ENCODE measurements at regions of chr11 and their contacts with region 1.

Region 1: GRCh38 chr11:9384535-9385303 is at the start of gene IPO7:
- DNase-seq: peak; percentile 68 to 88 (median 84)
- ATAC-seq: peak; percentile 99
- H3K4me3 ChIP-seq: peak within 1 kb of the TSS; percentile 78
- H3K4me3 Mint-ChIP-seq: peak within 1 kb of the TSS; percentile 89 to 98 (median 94)
- H3K27ac ChIP-seq: peak within 1 kb of the TSS; percentile 88
- H3K27ac Mint-ChIP-seq: peak within 1 kb of the TSS; percentile 79 to 94 (median 91)
- H3K4me1 ChIP-seq: peaks cover 11 to 15% of the 10 kb centered on the region in 2 donors
- H3K4me1 Mint-ChIP-seq: peaks cover 25 to 51% (median 38%) of the 10 kb centered on the region in 7 donors
- H3K27me3 ChIP-seq: no peaks in the 10 kb centered on the region
- H3K27me3 Mint-ChIP-seq: no peaks in the 10 kb centered on the region
- total RNA-seq, gene IPO7: 47.3 to 105 (median 61.3) TPM

Region 2: GRCh38 chr11:9203691-9204311 is 180.9 kb before region 1 on chr11:
- CTCF ChIA-PET with region 1: no interaction called
- POLR2A ChIA-PET with region 1: no interaction called
- intact Hi-C with region 1: loop called in 1 of 2 experiments (anchors 5 kb)
- DNase-seq: peak in 7 of 9 donors; percentile 13 to 50 (median 24)
- ATAC-seq: peak; percentile 61
- H3K4me3 ChIP-seq: no peak overlapping the region
- H3K4me3 Mint-ChIP-seq: no peak overlapping the region
- H3K27ac ChIP-seq: no peak overlapping the region
- H3K27ac Mint-ChIP-seq: peak overlapping the region in 2 of 9 donors; percentile 9 to 50
- H3K4me1 ChIP-seq: no peaks in the 10 kb centered on the region
- H3K4me1 Mint-ChIP-seq: peaks cover 15 to 55% (median 26%) of the 10 kb centered on the region in 7 donors
- H3K27me3 ChIP-seq: no peaks in the 10 kb centered on the region
- H3K27me3 Mint-ChIP-seq: no peaks in the 10 kb centered on the region

Region 3: DNA sequence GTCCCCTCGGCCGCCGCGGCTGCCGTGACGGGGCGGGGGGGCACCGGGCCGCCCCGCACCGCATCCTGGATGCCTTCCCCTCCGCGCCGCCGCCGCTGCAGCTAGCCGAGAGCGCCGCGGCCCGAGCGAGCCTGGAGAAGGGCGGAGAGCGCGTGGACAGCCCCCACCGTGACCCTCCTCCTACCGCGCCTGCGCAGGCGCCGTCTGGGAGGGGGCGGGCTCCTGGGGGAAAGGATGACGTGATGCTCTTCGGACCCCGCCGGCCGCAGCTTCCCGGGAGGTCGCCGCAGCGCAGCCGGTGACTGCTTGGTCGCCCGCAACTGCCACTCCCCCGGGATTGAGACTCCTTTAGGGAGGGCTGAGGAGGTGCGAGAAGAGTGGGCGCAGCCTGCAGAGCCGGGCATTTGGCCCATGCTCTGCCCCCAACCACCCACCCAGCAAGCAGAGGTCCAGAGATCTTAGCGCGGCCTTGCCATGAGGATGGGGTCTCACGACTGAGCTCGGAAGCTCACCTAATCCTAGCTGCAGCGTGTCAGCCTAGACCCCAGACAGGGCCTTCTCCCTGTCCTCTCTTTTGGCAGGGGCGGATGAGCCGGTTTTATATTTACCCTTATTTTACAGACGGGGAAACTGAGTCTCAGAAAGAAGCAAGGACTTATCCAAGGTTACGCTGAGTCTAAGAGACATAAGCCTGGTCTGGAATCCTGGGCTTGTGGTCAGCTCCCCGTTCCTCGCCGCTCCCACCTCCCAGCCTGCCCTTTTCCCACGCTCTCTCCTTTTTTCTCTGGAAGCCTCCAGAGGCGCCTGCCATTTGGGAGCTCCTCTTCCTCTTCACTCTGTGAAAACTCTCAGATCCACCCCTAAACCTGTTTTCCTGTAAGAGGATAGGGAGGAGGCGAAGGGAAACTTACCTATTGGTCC is 119.2 kb before region 1 on chr11 and contains the start of gene DENND5A:
- CTCF ChIA-PET with region 1: no interaction called
- POLR2A ChIA-PET with region 1: no interaction called
- intact Hi-C with region 1: loop called in 1 of 2 experiments (anchors 5 kb)
- DNase-seq: peak; percentile 12 to 65 (median 34)
- ATAC-seq: peak; percentile 74
- H3K4me3 ChIP-seq: peak within 1 kb of the TSS; percentile 72
- H3K4me3 Mint-ChIP-seq: peak within 1 kb of the TSS; percentile 87 to 100 (median 97)
- H3K27ac ChIP-seq: peak within 1 kb of the TSS; percentile 72
- H3K27ac Mint-ChIP-seq: peak within 1 kb of the TSS; percentile 89 to 99 (median 95)
- H3K4me1 ChIP-seq: peaks cover 11 to 22% of the 10 kb centered on the region in 2 donors
- H3K4me1 Mint-ChIP-seq: peaks cover 25 to 43% (median 39%) of the 10 kb centered on the region in 7 donors
- H3K27me3 ChIP-seq: no peaks in the 10 kb centered on the region
- H3K27me3 Mint-ChIP-seq: peaks cover 0 to 46% (median 0%) of the 10 kb centered on the region in 5 donors
- total RNA-seq, gene DENND5A: 65.0 to 178 (median 108) TPM

Region 4: DNA sequence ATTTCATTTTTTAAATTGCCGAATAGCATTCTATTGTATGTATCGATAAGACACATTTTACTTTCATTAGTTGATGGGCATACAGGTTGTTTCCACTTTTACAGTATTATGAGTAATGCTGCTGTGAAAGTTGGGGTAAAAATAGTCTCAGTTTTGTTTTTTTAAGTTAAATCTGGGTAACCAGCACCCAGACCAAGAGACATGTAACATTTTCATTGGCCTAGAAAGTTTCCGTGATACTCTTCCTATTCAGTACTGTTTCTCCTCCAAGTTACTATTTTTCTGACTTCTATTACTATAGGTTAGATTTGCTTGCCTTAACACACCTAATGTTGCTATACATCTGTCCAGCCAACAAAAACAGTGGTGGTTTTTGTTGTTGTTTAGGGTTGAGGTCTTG is 12.0 kb after region 1 on chr11:
- CTCF ChIA-PET with region 1: no interaction called
- POLR2A ChIA-PET with region 1: interaction called, 8 read pairs
- intact Hi-C with region 1: loop called in 1 of 2 experiments (anchors 1 kb)
- DNase-seq: no peak
- ATAC-seq: no peak
- H3K4me3 ChIP-seq: no peak overlapping the region
- H3K4me3 Mint-ChIP-seq: peak overlapping the region in 5 of 10 donors; percentile 1 to 68 (median 10)
- H3K27ac ChIP-seq: no peak overlapping the region
- H3K27ac Mint-ChIP-seq: peak overlapping the region in 2 of 9 donors; percentile 3 to 11
- H3K4me1 ChIP-seq: peaks cover 8 to 13% of the 10 kb centered on the region in 2 donors
- H3K4me1 Mint-ChIP-seq: peaks cover 45 to 73% (median 60%) of the 10 kb centered on the region in 7 donors
- H3K27me3 ChIP-seq: no peaks in the 10 kb centered on the region
- H3K27me3 Mint-ChIP-seq: no peaks in the 10 kb centered on the region